ENCODE measurements at regions of chr1 and their contacts with region 1.

Region 1: GRCh38 chr1:52552505-52553361 is at the start of gene TUT4:
- DNase-seq: peak; percentile 62
- H3K4me3 ChIP-seq: peak within 1 kb of the TSS; percentile 87 to 94
- H3K27ac ChIP-seq: peak within 1 kb of the TSS; percentile 94
- H3K4me1 ChIP-seq: no peaks in the 10 kb centered on the region
- H3K27me3 ChIP-seq: no peaks in the 10 kb centered on the region
- CTCF ChIP-seq: no peak
- POLR2A ChIP-seq: peak; percentile 67
- total RNA-seq, gene TUT4: 44.4 to 76.1 TPM

Region 2: DNA sequence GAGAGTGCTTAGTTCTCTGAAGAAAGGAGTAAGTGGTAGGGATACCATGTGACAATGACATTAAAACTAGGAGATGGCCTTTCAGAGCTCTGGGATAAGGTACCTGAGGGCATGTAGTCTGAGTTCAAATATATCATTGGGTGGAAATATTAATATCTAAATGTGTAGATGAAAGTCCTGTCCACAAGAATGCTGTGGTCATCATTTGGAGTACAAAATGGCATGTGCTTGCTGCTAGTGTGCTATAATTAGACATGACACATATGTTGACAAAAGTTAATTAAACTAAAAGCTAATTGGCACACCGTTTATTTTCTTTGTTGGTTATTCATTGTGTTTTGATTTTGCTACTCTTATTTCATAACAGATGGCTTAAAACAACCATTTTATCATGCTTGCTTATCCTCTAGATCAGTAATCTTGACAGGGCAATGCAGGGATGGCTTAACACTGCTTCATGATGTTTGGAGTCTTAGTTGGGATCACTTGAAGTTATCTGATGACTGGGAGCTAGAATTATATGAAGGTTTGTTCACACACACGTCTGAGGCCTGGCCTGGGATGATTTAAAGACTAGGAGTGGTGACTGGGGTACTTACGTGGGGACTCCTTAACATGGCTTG is 217.7 kb before region 1 on chr1:
- intact Hi-C with region 1: no loop called
- DNase-seq: no peak
- H3K4me3 ChIP-seq: no peak overlapping the region
- H3K27ac ChIP-seq: no peak overlapping the region
- H3K4me1 ChIP-seq: no peaks in the 10 kb centered on the region
- H3K27me3 ChIP-seq: no peaks in the 10 kb centered on the region
- CTCF ChIP-seq: no peak
- POLR2A ChIP-seq: no peak

Region 3: GRCh38 chr1:52601991-52602855 is 49.5 kb after region 1 on chr1 and contains the start of gene GPX7:
- intact Hi-C with region 1: loop called (anchors 10 kb)
- DNase-seq: peak; percentile 19
- H3K4me3 ChIP-seq: peak within 1 kb of the TSS; percentile 47 to 51
- H3K27ac ChIP-seq: peak within 1 kb of the TSS; percentile 70 to 79
- H3K4me1 ChIP-seq: peaks cover 8% of the 10 kb centered on the region
- H3K27me3 ChIP-seq: no peaks in the 10 kb centered on the region
- CTCF ChIP-seq: no peak
- POLR2A ChIP-seq: no peak
- total RNA-seq, gene GPX7: 22.7 to 26.3 TPM

Region 4: GRCh38 chr1:52674497-52675384 is 122.0 kb after region 1 on chr1:
- intact Hi-C with region 1: no loop called
- DNase-seq: no peak
- H3K4me3 ChIP-seq: no peak overlapping the region
- H3K27ac ChIP-seq: no peak overlapping the region
- H3K4me1 ChIP-seq: no peaks in the 10 kb centered on the region
- H3K27me3 ChIP-seq: no peaks in the 10 kb centered on the region
- CTCF ChIP-seq: no peak
- POLR2A ChIP-seq: no peak

Measured in prostate gland (tissue), 2 donors.